CD8-positive, alpha-beta T cell (primary cell): ENCODE measurements at regions of chr7 and their contacts with region 1.

Region 1: DNA sequence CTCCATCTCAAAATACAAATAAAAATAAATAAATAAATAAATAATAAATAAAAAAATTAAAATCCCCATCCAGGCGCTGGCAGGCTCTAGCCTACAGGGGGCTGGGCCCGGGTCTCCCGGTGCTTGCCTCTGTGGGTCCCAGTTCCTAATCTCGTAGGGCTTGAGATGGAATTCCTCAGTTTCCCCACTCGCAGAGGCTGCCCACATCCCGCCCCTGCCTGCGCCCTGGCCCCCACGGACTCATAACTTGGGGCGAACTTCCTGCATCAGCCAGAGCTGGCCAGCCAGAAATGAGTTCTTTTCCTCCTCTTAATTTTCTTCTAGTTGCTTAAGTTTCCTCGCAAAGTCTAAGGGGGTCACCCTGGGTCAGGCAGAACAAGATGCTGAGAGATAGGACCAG is 22.0 kb upstream of the SRRM3 start:
- DNase-seq: no peak
- ATAC-seq: no peak
- H3K4me3 ChIP-seq: no peak overlapping the region
- H3K4me3 Mint-ChIP-seq: no peak overlapping the region
- H3K27ac ChIP-seq: no peak overlapping the region
- H3K27ac Mint-ChIP-seq: no peak overlapping the region
- H3K4me1 ChIP-seq: no peaks in the 10 kb centered on the region
- H3K4me1 Mint-ChIP-seq: peaks cover 3% of the 10 kb centered on the region
- H3K27me3 ChIP-seq: no peaks in the 10 kb centered on the region
- H3K27me3 Mint-ChIP-seq: peaks cover 4% of the 10 kb centered on the region
- CTCF ChIP-seq: no peak

Region 2: DNA sequence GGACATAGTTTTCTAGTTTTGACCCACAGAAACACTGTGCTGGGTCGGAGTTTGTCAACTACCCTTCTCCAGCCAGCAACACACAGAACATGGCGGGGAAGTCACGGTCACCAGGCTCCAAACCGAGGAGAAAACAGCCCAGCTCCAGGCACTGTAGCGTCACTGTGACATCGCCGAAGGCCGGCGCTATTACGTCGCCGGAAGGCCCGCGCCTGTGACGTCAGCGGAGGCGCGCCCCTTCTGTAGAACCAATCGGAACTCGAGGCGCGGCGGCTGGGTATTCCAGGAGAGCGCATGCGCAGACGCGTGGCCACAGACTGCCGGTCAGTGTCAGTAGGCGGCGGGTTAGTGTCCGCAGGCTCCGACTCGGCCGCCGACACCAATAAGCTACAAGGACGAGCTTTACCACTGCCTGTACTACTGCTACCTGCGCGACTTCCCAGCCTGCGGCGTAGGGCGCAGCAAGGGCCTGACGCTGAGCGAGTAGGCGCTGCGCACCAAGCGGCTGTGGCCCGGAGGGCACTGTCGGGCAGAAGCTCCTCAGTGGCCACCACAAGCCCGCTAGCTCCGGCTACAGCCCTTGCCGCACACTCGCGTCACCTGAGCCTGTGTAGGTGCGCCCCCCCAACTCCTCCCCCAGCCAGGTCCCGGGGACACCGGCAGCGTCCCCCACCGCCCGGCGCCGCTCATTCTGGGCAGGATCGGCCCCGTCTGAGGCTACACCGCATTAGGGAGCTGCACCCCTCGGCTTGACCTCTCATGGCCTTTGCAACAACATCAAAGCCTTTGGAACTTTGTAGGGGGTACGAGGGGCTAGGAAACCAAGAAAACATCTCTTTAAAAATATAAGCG is 13.1 kb before region 1 on chr7:
- CTCF ChIA-PET with region 1: interaction called, 28 read pairs
- POLR2A ChIA-PET with region 1: no interaction called
- intact Hi-C with region 1: no loop called
- DNase-seq: peak; percentile 84 to 96 (median 90)
- ATAC-seq: peak; percentile 90
- H3K4me3 ChIP-seq: peak overlapping the region; percentile 78 to 87
- H3K4me3 Mint-ChIP-seq: peak overlapping the region; percentile 92
- H3K27ac ChIP-seq: peak overlapping the region; percentile 92 to 93
- H3K27ac Mint-ChIP-seq: peak overlapping the region; percentile 98
- H3K4me1 ChIP-seq: peaks cover 5% of the 10 kb centered on the region
- H3K4me1 Mint-ChIP-seq: peaks cover 7% of the 10 kb centered on the region
- H3K27me3 ChIP-seq: no peaks in the 10 kb centered on the region
- H3K27me3 Mint-ChIP-seq: no peaks in the 10 kb centered on the region
- CTCF ChIP-seq: no peak

Region 3: GRCh38 chr7:76262683-76263402 is 83.2 kb after region 1 on chr7:
- CTCF ChIA-PET with region 1: interaction called, 3 read pairs
- POLR2A ChIA-PET with region 1: no interaction called
- intact Hi-C with region 1: loop called (anchors 1 kb)
- DNase-seq: peak in 3 of 9 experiments; percentile 18 to 56 (median 36)
- ATAC-seq: no peak
- H3K4me3 ChIP-seq: no peak overlapping the region
- H3K4me3 Mint-ChIP-seq: no peak overlapping the region
- H3K27ac ChIP-seq: no peak overlapping the region
- H3K27ac Mint-ChIP-seq: no peak overlapping the region
- H3K4me1 ChIP-seq: peaks cover 6% of the 10 kb centered on the region
- H3K4me1 Mint-ChIP-seq: peaks cover 6% of the 10 kb centered on the region
- H3K27me3 ChIP-seq: peaks cover 0 to 11% of the 10 kb centered on the region in 2 experiments
- H3K27me3 Mint-ChIP-seq: peaks cover 34% of the 10 kb centered on the region
- CTCF ChIP-seq: peak; percentile 21

Region 4: DNA sequence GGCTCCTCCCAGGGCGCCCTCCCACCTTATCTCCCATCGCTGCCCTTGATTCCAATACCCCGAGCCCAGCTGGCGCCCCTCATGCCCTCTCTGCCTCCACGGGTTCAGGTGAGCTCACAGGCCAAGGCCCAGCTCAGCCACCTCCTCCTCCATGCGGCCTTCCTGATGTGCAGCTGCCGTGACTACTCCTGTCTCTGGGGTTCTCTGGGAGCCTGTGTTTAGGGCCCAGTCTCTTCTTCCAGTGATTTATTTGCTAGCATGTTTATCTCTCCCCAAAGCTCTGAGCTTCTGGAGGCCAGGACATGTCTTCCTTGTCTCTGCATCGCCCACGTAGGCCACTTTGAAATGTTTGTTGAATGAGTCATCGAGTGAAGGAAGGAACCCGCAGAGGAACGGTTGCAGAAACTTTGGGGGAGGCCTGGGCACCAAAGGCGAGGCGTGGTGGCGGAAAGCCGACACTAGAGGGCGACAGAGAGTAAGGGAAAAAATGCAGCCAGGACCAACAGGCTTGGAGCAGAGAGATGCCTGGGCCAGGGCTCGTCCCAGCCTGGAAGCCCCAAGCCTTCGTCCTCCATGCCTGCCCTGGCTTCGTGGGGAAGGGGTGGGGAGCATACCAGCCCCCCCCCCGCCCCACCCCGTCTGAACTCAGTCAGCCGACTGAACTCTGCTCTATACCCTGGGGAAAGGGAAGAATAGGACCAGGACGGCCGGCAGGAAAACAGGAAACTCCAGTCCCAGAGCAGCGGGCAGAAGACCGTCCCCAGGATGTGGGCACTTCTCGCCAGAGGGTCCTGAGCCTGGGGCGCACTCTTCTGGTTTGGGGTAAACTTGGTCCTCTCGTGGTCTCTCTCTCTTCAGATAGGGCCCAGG is 111.9 kb after region 1 on chr7:
- CTCF ChIA-PET with region 1: interaction called, 24 read pairs
- POLR2A ChIA-PET with region 1: no interaction called
- intact Hi-C with region 1: loop called (anchors 1 kb)
- DNase-seq: peak; percentile 66 to 91 (median 86)
- ATAC-seq: peak; percentile 95
- H3K4me3 ChIP-seq: no peak overlapping the region
- H3K4me3 Mint-ChIP-seq: no peak overlapping the region
- H3K27ac ChIP-seq: no peak overlapping the region
- H3K27ac Mint-ChIP-seq: no peak overlapping the region
- H3K4me1 ChIP-seq: no peaks in the 10 kb centered on the region
- H3K4me1 Mint-ChIP-seq: peaks cover 6% of the 10 kb centered on the region
- H3K27me3 ChIP-seq: no peaks in the 10 kb centered on the region
- H3K27me3 Mint-ChIP-seq: no peaks in the 10 kb centered on the region
- CTCF ChIP-seq: peak; percentile 93

Region 5: DNA sequence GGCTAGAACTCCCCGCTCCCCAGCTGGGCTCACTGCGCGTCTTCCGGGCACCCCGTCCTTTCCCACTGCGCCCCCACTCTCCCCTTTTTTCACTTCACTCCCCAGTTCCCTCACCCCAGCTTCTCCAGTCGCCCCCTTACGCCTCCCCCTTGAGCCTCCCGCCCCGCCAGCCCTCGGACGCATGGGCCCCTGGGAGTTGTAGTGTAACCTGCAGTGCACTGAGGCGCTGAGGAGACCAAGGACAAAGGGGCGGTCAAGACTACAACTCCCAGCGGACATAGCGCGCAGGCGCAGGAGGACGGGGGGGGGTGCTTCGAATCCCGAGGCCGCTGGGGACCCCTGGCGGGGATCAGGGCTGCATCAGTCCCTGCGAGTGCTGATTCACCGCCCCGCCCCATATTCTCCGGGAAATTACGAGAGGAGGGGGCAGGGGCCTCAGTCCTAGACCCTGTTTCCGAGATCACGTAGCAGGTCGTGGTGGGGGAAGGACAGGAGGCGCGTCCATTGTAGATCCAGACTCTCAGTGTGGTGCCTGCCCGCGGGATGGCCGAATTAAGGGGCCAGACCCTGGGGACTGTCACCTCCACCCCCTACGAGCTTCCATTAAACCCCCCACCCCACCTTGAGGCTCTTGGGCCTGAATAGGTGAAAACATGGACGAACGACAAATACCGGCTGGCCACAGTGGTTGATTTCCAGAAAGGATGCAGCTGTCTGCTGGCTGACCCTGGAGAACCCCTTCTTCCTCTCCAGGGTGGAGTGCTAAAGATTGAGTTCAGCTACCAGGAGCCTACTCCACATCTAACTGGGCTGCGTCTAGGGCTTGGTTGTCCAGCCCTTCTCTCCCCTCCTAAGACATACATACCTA is 179.7 kb after region 1 on chr7:
- CTCF ChIA-PET with region 1: interaction called, 9 read pairs
- POLR2A ChIA-PET with region 1: no interaction called
- intact Hi-C with region 1: loop called (anchors 5 kb)
- DNase-seq: peak; percentile 86 to 98 (median 95)
- ATAC-seq: peak; percentile 90
- H3K4me3 ChIP-seq: peak overlapping the region; percentile 94 to 99
- H3K4me3 Mint-ChIP-seq: peak overlapping the region; percentile 96
- H3K27ac ChIP-seq: peak overlapping the region; percentile 96
- H3K27ac Mint-ChIP-seq: peak overlapping the region; percentile 94
- H3K4me1 ChIP-seq: peaks cover 28% of the 10 kb centered on the region
- H3K4me1 Mint-ChIP-seq: peaks cover 39% of the 10 kb centered on the region
- H3K27me3 ChIP-seq: no peaks in the 10 kb centered on the region
- H3K27me3 Mint-ChIP-seq: no peaks in the 10 kb centered on the region
- CTCF ChIP-seq: peak; percentile 54